K562 (cell line): ENCODE measurements at regions of chr9 and their contacts with region 1.

Region 1: DNA sequence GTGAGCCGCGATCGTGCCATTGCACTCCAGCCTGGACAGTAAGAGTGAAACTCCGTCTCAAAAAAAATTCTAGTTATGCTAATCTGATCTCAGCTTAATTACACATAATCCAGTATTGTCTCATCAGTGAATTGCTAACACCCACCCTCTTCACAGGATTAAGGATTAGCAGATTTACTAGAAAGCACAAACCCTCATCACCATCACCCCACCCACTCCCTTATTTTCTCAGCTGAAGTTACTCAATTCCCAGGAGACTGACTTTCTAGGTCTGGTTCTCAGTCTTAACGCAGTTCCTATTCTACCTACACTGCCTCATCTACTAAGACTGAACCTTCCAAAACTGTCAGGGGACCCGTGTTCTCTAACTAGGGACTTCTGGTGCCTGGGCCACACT is 9.0 kb downstream of the TOR1B start:
- DNase-seq: no peak
- ATAC-seq: no peak; the same call in 2 of the 3 replicates
- H3K4me3 ChIP-seq: no peak overlapping the region
- H3K27ac ChIP-seq: peak overlapping the region; percentile 11; the same call in 1 of the 3 replicates
- H3K4me1 ChIP-seq: peaks cover 4 to 17% of the 10 kb centered on the region in 2 experiments; a peak in 3 of 5 replicates
- H3K27me3 ChIP-seq: no peaks in the 10 kb centered on the region
- CTCF ChIP-seq: no peak
- EP300 ChIP-seq: no peak
- POLR2A ChIP-seq: no peak
- RAD21 ChIP-seq: no peak

Region 2: GRCh38 chr9:129823935-129824601 is 12.1 kb after region 1 on chr9 and contains the start of gene TOR1A:
- CTCF ChIA-PET with region 1: no interaction called
- POLR2A ChIA-PET with region 1: interaction called, 49 read pairs
- in situ Hi-C with region 1: no loop called
- intact Hi-C with region 1: no loop called
- DNase-seq: peak; percentile 95 to 99 (median 96)
- ATAC-seq: peak; percentile 95
- H3K4me3 ChIP-seq: peak within 1 kb of the TSS; percentile 88
- H3K27ac ChIP-seq: peak within 1 kb of the TSS; percentile 83
- H3K4me1 ChIP-seq: peaks cover 12 to 13% of the 10 kb centered on the region in 2 experiments; a peak in 4 of 5 replicates
- H3K27me3 ChIP-seq: no peaks in the 10 kb centered on the region
- CTCF ChIP-seq: no peak; a peak in 1 of 6 replicates
- EP300 ChIP-seq: peak; percentile 44
- POLR2A ChIP-seq: peak; percentile 96
- RAD21 ChIP-seq: no peak; a peak in 2 of 4 replicates
- polyA plus RNA-seq, gene TOR1A: 4.5 to 9.9 TPM